ENCODE measurements at regions of chr12 and their contacts with region 1.

Region 1: GRCh38 chr12:106386813-106387535 is 29.4 kb downstream of the POLR3B start:
- DNase-seq: no peak
- H3K4me3 ChIP-seq: no peak overlapping the region
- H3K27ac ChIP-seq: no peak overlapping the region
- H3K4me1 ChIP-seq: peaks cover 0 to 5% (median 0%) of the 10 kb centered on the region in 4 donors
- H3K27me3 ChIP-seq: no peaks in the 10 kb centered on the region
- CTCF ChIP-seq: no peak
- EP300 ChIP-seq: no peak
- POLR2A ChIP-seq: no peak

Region 2: DNA sequence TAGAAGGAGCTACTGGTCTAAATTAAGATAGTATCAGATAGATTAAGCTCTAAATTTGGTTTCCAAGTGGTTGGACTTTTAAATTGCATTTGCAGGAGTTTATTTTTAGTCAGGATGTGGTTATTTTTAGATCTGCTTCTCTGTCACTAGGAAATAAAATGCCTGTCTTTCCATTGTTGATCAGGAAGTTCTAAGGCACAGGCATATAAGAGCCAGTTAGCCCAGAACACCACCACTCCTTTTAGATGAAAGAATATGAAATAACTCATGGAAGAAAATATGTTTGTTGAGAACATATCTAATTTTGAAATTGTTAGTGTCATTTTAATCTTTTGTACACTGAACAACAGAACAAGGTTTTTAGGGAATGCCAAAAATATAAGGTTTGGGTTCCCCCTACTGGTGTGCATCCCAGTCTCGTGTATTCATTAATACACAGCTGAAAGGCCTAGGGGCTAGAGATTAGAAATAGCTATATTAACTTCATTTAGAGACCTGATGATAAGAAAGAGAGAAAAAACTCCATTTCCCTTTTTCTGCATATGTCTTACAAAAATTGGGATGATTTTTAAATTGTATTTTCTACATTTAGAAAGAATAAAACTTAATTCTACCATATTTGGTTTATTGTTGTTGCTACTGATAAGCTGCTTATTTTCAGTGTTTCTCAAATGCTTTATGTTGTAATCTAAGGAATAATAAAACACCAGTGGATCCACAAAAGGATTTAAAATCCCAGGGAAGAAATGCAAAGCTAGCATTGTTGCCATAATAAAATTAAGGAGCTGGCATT is 454.7 kb after region 1 on chr12:
- intact Hi-C with region 1: loop called (anchors 5 kb)
- DNase-seq: no peak
- H3K4me3 ChIP-seq: no peak overlapping the region
- H3K27ac ChIP-seq: peak overlapping the region in 2 of 4 donors; percentile 45 to 49
- H3K4me1 ChIP-seq: peaks cover 0 to 38% (median 35%) of the 10 kb centered on the region in 4 donors
- H3K27me3 ChIP-seq: no peaks in the 10 kb centered on the region
- CTCF ChIP-seq: peak in 3 of 4 experiments; percentile 44 to 58 (median 45)
- EP300 ChIP-seq: no peak
- POLR2A ChIP-seq: no peak

Region 3: DNA sequence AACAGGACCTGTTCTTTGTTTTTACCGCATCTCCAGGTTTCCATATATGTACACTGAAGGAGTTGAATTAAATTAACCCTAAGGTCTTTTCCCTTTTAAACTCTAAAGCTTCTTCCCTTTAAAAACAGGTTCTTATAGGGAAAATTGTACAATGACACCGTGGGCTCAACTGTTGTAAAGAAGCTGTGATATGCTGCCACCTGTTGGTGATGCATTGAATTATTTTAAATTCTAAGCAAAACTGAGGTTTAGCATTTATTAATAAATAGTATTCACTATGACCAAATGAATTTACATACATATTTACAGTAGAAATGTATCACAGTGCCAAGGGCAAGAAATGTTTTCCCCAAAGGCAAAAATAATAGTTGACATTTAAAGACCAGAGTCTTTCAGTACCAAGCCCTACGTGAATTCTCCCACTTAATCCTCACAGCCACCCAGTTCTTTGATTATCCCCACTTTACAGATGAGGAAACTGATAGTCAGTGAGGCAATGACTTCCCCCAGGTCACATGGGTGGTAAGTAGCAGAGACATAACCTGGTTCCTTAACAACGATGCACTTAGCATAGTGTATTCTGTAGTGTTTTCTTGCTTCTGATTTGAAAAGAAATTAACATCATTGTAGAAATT is 533.1 kb after region 1 on chr12:
- intact Hi-C with region 1: loop called (anchors 1 kb)
- DNase-seq: no peak
- H3K4me3 ChIP-seq: no peak overlapping the region
- H3K27ac ChIP-seq: no peak overlapping the region
- H3K4me1 ChIP-seq: no peaks in the 10 kb centered on the region
- H3K27me3 ChIP-seq: no peaks in the 10 kb centered on the region
- CTCF ChIP-seq: peak; percentile 51 to 80 (median 73)
- EP300 ChIP-seq: no peak
- POLR2A ChIP-seq: no peak

Measured in sigmoid colon (tissue), 7 donors.